ENCODE measurements at regions of chr1 and their contacts with region 1.

Region 1: DNA sequence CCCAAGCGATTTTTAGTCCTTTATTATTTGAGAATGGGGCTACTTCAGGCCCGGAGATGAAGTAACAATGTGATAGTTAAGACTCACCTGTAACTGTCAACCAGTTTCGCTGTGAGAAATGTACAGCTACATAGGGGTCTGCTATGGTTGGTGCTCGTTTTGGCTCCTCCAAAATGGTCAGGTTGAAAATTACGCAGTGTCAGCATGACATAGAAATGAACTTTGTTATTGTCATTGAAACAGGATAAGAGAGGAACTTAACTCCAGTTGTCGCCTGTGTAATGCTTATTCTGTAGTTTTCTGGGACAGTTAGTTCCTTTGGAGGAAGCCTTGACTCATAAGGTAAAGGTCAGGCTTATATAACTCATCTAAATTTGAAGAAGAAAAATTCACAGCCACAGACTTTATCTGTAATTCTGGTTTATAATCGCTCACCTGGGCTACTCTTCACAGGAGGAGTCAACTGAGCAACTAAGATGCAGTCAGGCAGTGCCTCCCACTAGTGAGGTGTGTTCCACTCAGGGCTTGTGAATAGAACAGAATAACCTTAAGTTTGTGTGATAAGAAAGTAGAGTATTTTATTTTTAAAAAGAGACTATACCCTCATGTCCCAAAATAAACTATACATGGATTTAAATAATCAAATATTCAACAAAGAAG is 130.9 kb downstream of the CD247 start:
- DNase-seq: no peak
- H3K4me3 ChIP-seq: no peak overlapping the region
- H3K27ac ChIP-seq: no peak overlapping the region
- H3K4me1 ChIP-seq: no peaks in the 10 kb centered on the region
- H3K27me3 ChIP-seq: no peaks in the 10 kb centered on the region
- CTCF ChIP-seq: no peak
- EP300 ChIP-seq: no peak
- RAD21 ChIP-seq: no peak

Region 2: GRCh38 chr1:167360120-167360519 is 27.3 kb before region 1 on chr1:
- CTCF ChIA-PET with region 1: no interaction called
- POLR2A ChIA-PET with region 1: no interaction called
- DNase-seq: no peak
- H3K4me3 ChIP-seq: no peak overlapping the region
- H3K27ac ChIP-seq: no peak overlapping the region
- H3K4me1 ChIP-seq: peaks cover 0 to 2% of the 10 kb centered on the region in 2 experiments; a peak in 1 of 4 replicates
- H3K27me3 ChIP-seq: no peaks in the 10 kb centered on the region
- CTCF ChIP-seq: no peak
- EP300 ChIP-seq: no peak
- RAD21 ChIP-seq: no peak

Region 3: GRCh38 chr1:167373398-167373797 is 14.0 kb before region 1 on chr1:
- CTCF ChIA-PET with region 1: interaction called, 15 read pairs
- POLR2A ChIA-PET with region 1: no interaction called
- DNase-seq: peak; percentile 65
- H3K4me3 ChIP-seq: no peak overlapping the region; a peak in 1 of 4 replicates
- H3K27ac ChIP-seq: peak overlapping the region in 1 of 2 experiments; percentile 78; a peak in 2 of 4 replicates
- H3K4me1 ChIP-seq: peaks cover 0 to 7% of the 10 kb centered on the region in 2 experiments; a peak in 2 of 4 replicates
- H3K27me3 ChIP-seq: no peaks in the 10 kb centered on the region
- CTCF ChIP-seq: no peak
- EP300 ChIP-seq: peak in 1 of 2 experiments; percentile 66; a peak in 2 of 4 replicates
- RAD21 ChIP-seq: no peak; the same call in 1 of the 2 replicates

Measured in SK-N-SH (cell line).